Caco-2 (cell line): ENCODE measurements at regions of chr4 and their contacts with region 1.

Region 1: GRCh38 chr4:121050300-121050699 is 22.0 kb downstream of the NDNF start:
- DNase-seq: no peak
- H3K4me3 ChIP-seq: no peak overlapping the region
- H3K4me3 Mint-ChIP-seq: no peak overlapping the region
- H3K27ac Mint-ChIP-seq: no peak overlapping the region
- H3K4me1 ChIP-seq: no peaks in the 10 kb centered on the region; the same call in none of the 2 replicates
- H3K4me1 Mint-ChIP-seq: no peaks in the 10 kb centered on the region
- H3K27me3 ChIP-seq: no peaks in the 10 kb centered on the region
- H3K27me3 Mint-ChIP-seq: no peaks in the 10 kb centered on the region
- CTCF ChIP-seq: peak in 1 of 2 experiments; percentile 10

Region 2: GRCh38 chr4:120071192-120071795 is 979.0 kb before region 1 on chr4:
- CTCF ChIA-PET with region 1: no interaction called
- POLR2A ChIA-PET with region 1: no interaction called
- intact Hi-C with region 1: loop called (anchors 1 kb)
- DNase-seq: peak; percentile 37 to 42
- H3K4me3 ChIP-seq: no peak overlapping the region
- H3K4me3 Mint-ChIP-seq: no peak overlapping the region
- H3K27ac Mint-ChIP-seq: no peak overlapping the region
- H3K4me1 ChIP-seq: peaks cover 5% of the 10 kb centered on the region; the same call in 1 of the 2 replicates
- H3K4me1 Mint-ChIP-seq: no peaks in the 10 kb centered on the region
- H3K27me3 ChIP-seq: no peaks in the 10 kb centered on the region
- H3K27me3 Mint-ChIP-seq: no peaks in the 10 kb centered on the region
- CTCF ChIP-seq: peak; percentile 38 to 65

Region 3: DNA sequence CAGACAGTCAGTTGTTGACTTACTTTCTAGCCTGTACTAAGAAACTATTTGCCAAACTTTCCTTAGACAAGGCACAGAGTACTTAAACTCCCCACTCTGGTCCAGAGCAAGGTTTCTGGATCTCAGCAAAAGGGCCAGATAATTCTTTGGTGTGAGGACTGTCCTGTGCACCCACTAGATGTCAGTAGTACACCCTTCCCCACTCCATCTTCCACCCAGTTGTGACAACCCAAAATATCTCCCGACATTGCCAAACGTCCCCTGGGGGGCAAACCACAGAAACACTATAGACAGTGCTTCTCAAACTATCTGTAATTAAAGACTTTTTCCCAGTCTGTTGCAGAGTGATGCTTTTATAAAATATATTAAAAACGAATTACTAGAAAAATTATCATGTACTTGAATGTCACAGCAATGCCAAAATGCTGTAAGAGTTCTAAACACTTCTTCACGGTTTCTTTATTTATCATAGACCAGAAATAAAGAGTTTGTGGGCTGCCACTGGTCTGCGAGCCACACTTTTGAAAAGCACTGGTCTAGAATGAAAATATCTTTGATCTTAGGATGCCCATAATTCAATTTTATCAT is 331.2 kb before region 1 on chr4:
- CTCF ChIA-PET with region 1: no interaction called
- POLR2A ChIA-PET with region 1: no interaction called
- intact Hi-C with region 1: loop called (anchors 1 kb)
- DNase-seq: peak in 1 of 2 experiments; percentile 46
- H3K4me3 ChIP-seq: no peak overlapping the region
- H3K4me3 Mint-ChIP-seq: no peak overlapping the region
- H3K27ac Mint-ChIP-seq: no peak overlapping the region
- H3K4me1 ChIP-seq: no peaks in the 10 kb centered on the region
- H3K4me1 Mint-ChIP-seq: peaks cover 19% of the 10 kb centered on the region
- H3K27me3 ChIP-seq: no peaks in the 10 kb centered on the region
- H3K27me3 Mint-ChIP-seq: no peaks in the 10 kb centered on the region
- CTCF ChIP-seq: peak; percentile 61 to 73

Region 4: DNA sequence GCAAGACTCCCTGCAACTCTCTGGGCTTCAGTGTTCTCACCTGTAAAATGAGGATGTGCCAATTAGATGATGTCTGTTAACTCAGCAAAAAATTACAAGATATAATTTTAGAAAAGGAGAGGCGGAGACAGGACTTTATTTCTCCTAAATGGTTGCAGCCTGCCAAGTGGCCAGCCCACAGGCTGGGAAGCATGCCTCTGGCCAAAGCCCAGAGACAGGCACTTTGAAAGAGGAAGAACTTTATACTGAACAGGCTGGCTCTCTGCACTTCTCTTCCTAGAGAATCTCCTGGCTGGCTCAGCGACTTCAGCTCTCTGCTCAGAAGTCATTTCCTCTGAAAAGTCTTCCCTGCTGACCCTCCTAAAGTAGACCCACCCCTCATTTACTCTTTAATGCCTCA is 131.5 kb before region 1 on chr4:
- CTCF ChIA-PET with region 1: no interaction called
- POLR2A ChIA-PET with region 1: no interaction called
- intact Hi-C with region 1: no loop called
- DNase-seq: no peak
- H3K4me3 ChIP-seq: no peak overlapping the region
- H3K4me3 Mint-ChIP-seq: no peak overlapping the region
- H3K27ac Mint-ChIP-seq: no peak overlapping the region
- H3K4me1 ChIP-seq: peaks cover 3% of the 10 kb centered on the region; the same call in 1 of the 2 replicates
- H3K4me1 Mint-ChIP-seq: peaks cover 8% of the 10 kb centered on the region
- H3K27me3 ChIP-seq: no peaks in the 10 kb centered on the region
- H3K27me3 Mint-ChIP-seq: no peaks in the 10 kb centered on the region
- CTCF ChIP-seq: no peak